ENCODE measurements at regions of chr6 and their contacts with region 1.

Region 1: DNA sequence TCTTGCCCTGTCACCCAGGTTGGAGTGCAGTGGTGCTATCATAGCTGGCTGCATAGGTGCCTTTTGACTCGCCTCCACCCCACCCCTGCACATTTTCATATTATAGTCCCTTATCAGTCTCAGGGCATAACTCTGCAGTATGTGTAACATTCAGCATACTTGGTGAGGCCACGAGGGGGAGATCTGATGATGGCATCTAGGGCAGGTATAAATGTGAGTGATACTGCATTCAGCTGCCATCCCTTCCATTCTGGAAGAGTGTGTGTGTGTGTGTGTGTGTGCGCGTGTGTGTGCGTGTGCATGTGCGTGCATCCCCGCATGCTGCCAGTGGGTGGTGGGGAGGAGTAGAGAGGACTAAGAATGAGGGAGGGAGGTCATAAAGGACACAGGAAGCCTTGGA is 81.4 kb downstream of the JARID2 start:
- DNase-seq: no peak
- ATAC-seq: peak; percentile 74
- H3K4me3 Mint-ChIP-seq: peak overlapping the region; percentile 56
- H3K27ac Mint-ChIP-seq: peak overlapping the region; percentile 89
- H3K4me1 Mint-ChIP-seq: peaks cover 96% of the 10 kb centered on the region
- H3K27me3 Mint-ChIP-seq: no peaks in the 10 kb centered on the region
- CTCF ChIP-seq: no peak

Region 2: DNA sequence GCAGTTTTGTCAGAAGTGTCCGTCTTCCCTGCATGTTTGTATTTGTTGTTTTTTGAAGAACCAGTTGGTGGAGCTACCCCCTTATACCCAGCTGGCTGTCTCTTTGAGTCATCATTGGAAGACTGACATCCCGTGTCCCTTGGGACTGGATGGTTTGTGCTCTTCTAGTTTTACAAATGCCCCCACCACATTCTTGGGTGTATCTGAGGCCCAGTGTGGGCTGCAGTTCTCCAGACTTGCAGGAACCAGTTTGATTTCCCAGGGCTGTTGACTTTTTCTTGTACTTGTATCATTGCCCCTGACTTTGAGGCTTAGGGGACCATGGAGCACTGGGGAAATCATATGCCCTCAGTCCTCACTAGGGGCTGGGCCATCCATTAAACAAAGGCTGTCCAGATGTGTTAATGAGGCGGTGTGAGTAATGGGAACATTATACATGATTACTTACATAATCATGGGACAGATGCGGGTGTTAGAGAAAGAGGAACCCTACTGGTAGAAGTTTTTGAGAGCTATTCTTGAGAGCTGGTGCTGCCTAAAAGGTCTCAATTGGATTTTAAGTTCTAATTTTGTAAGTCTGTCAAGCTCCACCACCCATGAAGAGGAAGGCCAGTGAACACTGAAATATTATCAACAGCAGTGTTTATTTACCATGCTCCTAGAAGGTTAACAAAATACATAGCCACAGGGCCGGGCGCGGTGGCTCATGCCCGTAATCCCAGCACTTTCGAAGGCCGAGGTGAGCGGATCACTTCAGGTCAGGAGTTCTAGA is 73.0 kb before region 1 on chr6:
- CTCF ChIA-PET with region 1: interaction called, 4 read pairs
- POLR2A ChIA-PET with region 1: interaction called, 21 read pairs
- intact Hi-C with region 1: loop called (anchors 2 kb)
- DNase-seq: no peak
- ATAC-seq: peak; percentile 67
- H3K4me3 Mint-ChIP-seq: peak overlapping the region; percentile 28
- H3K27ac Mint-ChIP-seq: peak overlapping the region; percentile 84
- H3K4me1 Mint-ChIP-seq: peaks cover 99% of the 10 kb centered on the region
- H3K27me3 Mint-ChIP-seq: no peaks in the 10 kb centered on the region
- CTCF ChIP-seq: no peak

Region 3: DNA sequence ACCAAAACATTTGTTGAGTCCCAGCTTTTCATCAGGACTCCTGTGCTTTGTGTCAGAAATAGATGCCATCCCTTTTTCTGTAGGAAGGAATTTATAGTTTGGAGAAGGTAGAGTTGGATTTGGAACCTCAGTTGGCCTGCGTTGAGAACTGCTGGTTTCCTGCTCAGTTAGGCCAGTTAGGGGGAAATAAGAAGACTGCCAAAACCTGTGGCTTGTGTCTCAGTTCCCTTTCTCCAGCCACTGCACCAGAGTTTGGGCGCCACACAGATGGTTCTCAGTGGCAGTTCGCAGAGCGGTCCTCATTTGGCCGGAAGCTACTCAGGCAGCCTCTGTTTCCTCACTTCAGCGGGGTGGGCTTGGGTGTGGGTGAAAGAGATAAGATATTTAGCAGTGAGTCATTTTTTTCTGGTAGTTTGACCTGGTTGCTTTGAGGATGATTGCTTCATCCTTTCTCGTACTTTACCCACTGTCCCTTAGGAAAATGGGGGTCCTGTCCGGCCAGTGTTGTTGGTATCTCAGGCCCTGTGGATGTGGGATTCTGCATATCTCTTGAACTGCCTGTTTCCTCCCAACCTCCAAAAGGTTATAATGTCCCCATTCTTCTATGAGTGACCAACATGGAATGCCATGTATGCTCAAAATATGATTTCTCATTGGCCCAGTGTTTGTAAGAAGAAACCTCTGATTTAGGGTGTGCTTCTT is 27.7 kb before region 1 on chr6:
- CTCF ChIA-PET with region 1: interaction called, 3 read pairs
- POLR2A ChIA-PET with region 1: interaction called, 15 read pairs
- intact Hi-C with region 1: loop called (anchors 5 kb)
- DNase-seq: peak; percentile 59
- ATAC-seq: peak; percentile 97
- H3K4me3 Mint-ChIP-seq: peak overlapping the region; percentile 67
- H3K27ac Mint-ChIP-seq: peak overlapping the region; percentile 89
- H3K4me1 Mint-ChIP-seq: peaks cover 81% of the 10 kb centered on the region
- H3K27me3 Mint-ChIP-seq: no peaks in the 10 kb centered on the region
- CTCF ChIP-seq: no peak

Region 4: GRCh38 chr6:15312500-15312899 is 14.8 kb before region 1 on chr6:
- CTCF ChIA-PET with region 1: interaction called, 3 read pairs
- POLR2A ChIA-PET with region 1: interaction called, 15 read pairs
- intact Hi-C with region 1: loop called (anchors 2 kb)
- DNase-seq: no peak
- ATAC-seq: peak; percentile 50
- H3K4me3 Mint-ChIP-seq: peak overlapping the region; percentile 69
- H3K27ac Mint-ChIP-seq: peak overlapping the region; percentile 86
- H3K4me1 Mint-ChIP-seq: peaks cover 91% of the 10 kb centered on the region
- H3K27me3 Mint-ChIP-seq: no peaks in the 10 kb centered on the region
- CTCF ChIP-seq: no peak

Region 5: DNA sequence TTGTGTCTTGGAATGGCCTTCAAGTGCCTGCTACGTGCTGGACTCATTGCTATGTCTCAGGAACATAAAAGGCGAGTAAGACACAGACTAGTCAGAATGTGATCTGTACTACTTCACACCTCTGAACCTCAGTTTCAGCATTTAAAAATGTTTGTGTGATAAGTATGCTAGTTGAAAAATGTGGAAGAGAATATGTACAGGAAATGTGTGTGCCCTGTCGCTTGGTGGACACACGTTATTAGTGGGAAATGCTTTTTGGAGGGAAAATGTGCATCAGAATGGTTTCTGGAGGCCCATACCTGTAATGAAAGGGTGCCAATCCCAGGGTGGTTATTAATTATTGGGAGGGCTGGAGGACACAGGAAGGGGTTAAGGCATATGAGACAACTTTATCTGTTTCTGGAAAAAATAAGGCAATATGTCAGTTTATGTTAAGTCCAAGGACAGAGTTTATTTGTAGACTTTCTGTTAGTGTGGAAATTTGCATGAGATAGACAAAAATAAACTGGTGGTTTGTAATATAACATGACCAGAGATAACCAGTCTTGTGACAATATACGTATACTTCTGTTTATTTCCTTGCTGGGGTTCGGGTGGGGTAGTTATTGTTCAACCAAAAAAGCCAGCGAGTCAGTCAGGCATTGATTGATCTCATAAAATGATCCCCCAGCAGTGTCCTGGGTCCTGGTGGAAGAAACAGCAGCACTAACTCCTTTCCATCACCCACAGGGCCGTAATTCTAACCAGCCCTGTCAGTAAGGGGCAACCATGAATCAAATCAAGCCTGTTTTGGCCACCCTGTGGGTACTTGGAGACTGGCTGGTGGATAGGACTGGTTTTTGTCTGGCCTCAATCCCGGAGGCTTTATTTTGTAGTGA is 36.5 kb after region 1 on chr6:
- CTCF ChIA-PET with region 1: no interaction called
- POLR2A ChIA-PET with region 1: no interaction called
- intact Hi-C with region 1: loop called (anchors 5 kb)
- DNase-seq: no peak
- ATAC-seq: peak; percentile 38
- H3K4me3 Mint-ChIP-seq: no peak overlapping the region
- H3K27ac Mint-ChIP-seq: no peak overlapping the region
- H3K4me1 Mint-ChIP-seq: peaks cover 38% of the 10 kb centered on the region
- H3K27me3 Mint-ChIP-seq: no peaks in the 10 kb centered on the region
- CTCF ChIP-seq: no peak

Region 6: GRCh38 chr6:15396808-15397207 is 69.5 kb after region 1 on chr6:
- CTCF ChIA-PET with region 1: no interaction called
- POLR2A ChIA-PET with region 1: no interaction called
- intact Hi-C with region 1: no loop called
- DNase-seq: no peak
- ATAC-seq: no peak
- H3K4me3 Mint-ChIP-seq: no peak overlapping the region
- H3K27ac Mint-ChIP-seq: no peak overlapping the region
- H3K4me1 Mint-ChIP-seq: peaks cover 57% of the 10 kb centered on the region
- H3K27me3 Mint-ChIP-seq: no peaks in the 10 kb centered on the region
- CTCF ChIP-seq: no peak

Region 7: GRCh38 chr6:15441215-15441868 is 114.1 kb after region 1 on chr6:
- CTCF ChIA-PET with region 1: interaction called, 3 read pairs
- POLR2A ChIA-PET with region 1: interaction called, 3 read pairs
- intact Hi-C with region 1: loop called (anchors 1 kb)
- DNase-seq: no peak
- ATAC-seq: peak; percentile 71
- H3K4me3 Mint-ChIP-seq: no peak overlapping the region
- H3K27ac Mint-ChIP-seq: peak overlapping the region; percentile 5
- H3K4me1 Mint-ChIP-seq: peaks cover 67% of the 10 kb centered on the region
- H3K27me3 Mint-ChIP-seq: no peaks in the 10 kb centered on the region
- CTCF ChIP-seq: no peak

Region 8: DNA sequence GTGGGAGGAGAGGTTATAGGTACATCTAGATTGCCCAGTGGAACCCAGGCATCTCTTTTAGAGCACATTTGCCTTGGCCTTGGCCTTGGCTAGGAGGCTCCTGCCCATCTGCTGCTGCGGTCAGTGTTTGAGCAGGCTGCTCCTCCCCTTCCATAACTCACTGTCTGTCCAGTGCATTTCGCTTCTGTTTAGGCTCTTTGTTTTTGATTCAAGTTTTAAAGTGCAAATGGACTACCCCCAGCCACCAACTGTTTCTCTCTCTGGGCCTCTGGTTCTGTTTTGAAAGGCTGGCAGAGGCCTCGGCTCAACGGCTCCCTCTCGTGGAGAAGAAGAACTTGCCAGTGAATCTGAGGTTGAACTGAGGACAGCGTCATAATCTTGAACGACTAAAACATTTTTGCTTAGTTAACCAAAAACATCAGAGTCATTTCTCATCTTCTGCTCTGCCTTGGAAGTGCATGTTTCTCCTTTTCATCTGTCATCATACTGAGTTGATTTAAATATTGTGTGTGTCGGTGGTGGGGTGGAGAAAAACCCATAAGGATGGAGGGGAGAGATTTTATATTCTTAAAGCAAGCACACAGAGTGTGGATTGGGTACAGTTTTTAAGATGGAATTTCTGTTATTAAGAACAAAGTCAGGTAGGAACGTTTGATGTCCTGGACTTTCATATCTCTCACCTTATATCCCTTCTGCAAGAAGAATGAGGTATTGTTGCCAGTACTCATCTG is 164.1 kb after region 1 on chr6:
- CTCF ChIA-PET with region 1: no interaction called
- POLR2A ChIA-PET with region 1: no interaction called
- intact Hi-C with region 1: no loop called
- DNase-seq: peak; percentile 35
- ATAC-seq: peak; percentile 82
- H3K4me3 Mint-ChIP-seq: no peak overlapping the region
- H3K27ac Mint-ChIP-seq: no peak overlapping the region
- H3K4me1 Mint-ChIP-seq: peaks cover 32% of the 10 kb centered on the region
- H3K27me3 Mint-ChIP-seq: no peaks in the 10 kb centered on the region
- CTCF ChIP-seq: peak; percentile 95

Region 9: GRCh38 chr6:16450285-16450684 is 1123.0 kb after region 1 on chr6:
- CTCF ChIA-PET with region 1: no interaction called
- POLR2A ChIA-PET with region 1: no interaction called
- intact Hi-C with region 1: no loop called
- DNase-seq: no peak
- ATAC-seq: no peak
- H3K4me3 Mint-ChIP-seq: no peak overlapping the region
- H3K27ac Mint-ChIP-seq: no peak overlapping the region
- H3K4me1 Mint-ChIP-seq: no peaks in the 10 kb centered on the region
- H3K27me3 Mint-ChIP-seq: no peaks in the 10 kb centered on the region
- CTCF ChIP-seq: no peak

Measured in activated B cell treated with CpG ODN at 0.5 μM for 24 hours (primary cell).